Panc1 (cell line): ENCODE measurements at regions of chr6 and their contacts with region 1.

Region 1: GRCh38 chr6:105402939-105403935 is at the start of gene PREP:
- DNase-seq: peak; percentile 70
- ATAC-seq: peak; percentile 97
- H3K4me3 ChIP-seq: peak within 1 kb of the TSS; percentile 92 to 96
- H3K27ac ChIP-seq: peak within 1 kb of the TSS; percentile 97
- H3K4me1 ChIP-seq: peaks cover 27% of the 10 kb centered on the region
- H3K27me3 ChIP-seq: no peaks in the 10 kb centered on the region
- CTCF ChIP-seq: peak; percentile 96
- total RNA-seq, gene PREP: 50.4 TPM

Region 2: GRCh38 chr6:104143757-104144156 is 1259.5 kb before region 1 on chr6:
- CTCF ChIA-PET with region 1: no interaction called
- POLR2A ChIA-PET with region 1: no interaction called
- in situ Hi-C with region 1: no loop called
- intact Hi-C with region 1: no loop called
- DNase-seq: no peak
- ATAC-seq: no peak
- H3K4me3 ChIP-seq: no peak overlapping the region
- H3K27ac ChIP-seq: no peak overlapping the region
- H3K4me1 ChIP-seq: no peaks in the 10 kb centered on the region
- H3K27me3 ChIP-seq: no peaks in the 10 kb centered on the region
- CTCF ChIP-seq: no peak

Region 3: DNA sequence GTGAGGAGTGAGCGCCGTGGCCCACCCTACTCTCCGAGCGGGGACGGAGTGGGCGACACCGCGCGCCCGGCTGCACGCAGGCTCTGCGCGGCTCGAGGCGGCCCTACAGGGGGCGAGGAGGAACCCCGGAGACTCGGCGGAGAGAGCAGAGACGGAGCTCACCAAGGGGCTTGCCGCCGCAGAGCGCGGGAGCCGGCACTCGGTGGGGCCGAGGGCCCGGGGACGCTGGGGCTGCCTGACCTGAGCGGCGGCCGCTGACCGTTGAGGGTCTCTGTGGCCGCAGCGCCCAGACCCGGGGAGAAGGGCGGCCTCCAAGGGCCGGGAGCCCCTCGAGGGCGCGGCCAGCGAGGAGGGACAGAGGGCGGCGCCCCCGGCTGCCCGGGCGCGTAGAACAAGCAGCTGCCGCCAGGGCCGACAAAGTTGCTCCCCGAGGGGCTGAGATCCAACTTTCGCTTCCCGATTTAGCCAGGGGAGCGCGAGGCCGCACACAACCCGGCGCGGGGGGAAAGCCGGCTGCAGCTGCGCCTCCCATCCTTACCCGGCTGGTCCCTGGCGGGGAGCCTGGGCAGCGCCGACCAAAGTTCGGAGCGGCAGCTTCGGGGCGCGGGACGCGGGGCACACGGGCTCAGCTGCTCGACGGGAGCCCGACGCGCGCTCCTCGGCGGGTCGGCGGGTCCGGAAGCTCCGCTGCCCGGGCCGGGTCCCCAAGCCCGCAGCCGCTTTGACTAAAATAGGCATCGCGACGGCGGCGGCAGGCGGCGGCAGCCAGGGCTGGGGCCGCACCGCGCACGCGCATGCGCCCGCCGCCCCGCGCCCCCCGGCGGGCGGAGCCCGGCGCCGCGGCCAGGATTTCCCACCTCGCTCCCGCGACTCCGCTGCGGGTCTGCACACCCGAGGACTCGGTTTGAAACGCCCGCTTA is 266.5 kb before region 1 on chr6:
- CTCF ChIA-PET with region 1: no interaction called
- POLR2A ChIA-PET with region 1: no interaction called
- in situ Hi-C with region 1: no loop called
- intact Hi-C with region 1: loop called (anchors 2 kb)
- DNase-seq: no peak
- ATAC-seq: peak; percentile 86
- H3K4me3 ChIP-seq: peak overlapping the region; percentile 76 to 78
- H3K27ac ChIP-seq: peak overlapping the region; percentile 87
- H3K4me1 ChIP-seq: peaks cover 17% of the 10 kb centered on the region
- H3K27me3 ChIP-seq: no peaks in the 10 kb centered on the region
- CTCF ChIP-seq: peak; percentile 38

Region 4: GRCh38 chr6:105442369-105442768 is 39.1 kb after region 1 on chr6:
- CTCF ChIA-PET with region 1: no interaction called
- POLR2A ChIA-PET with region 1: no interaction called
- in situ Hi-C with region 1: no loop called
- intact Hi-C with region 1: no loop called
- DNase-seq: no peak
- ATAC-seq: no peak
- H3K4me3 ChIP-seq: no peak overlapping the region
- H3K27ac ChIP-seq: no peak overlapping the region; the same call in 1 of the 2 replicates
- H3K4me1 ChIP-seq: no peaks in the 10 kb centered on the region
- H3K27me3 ChIP-seq: no peaks in the 10 kb centered on the region
- CTCF ChIP-seq: no peak